Tibial artery (tissue), 4 donors: ENCODE measurements at regions of chr3 and their contacts with region 1.

Region 1: GRCh38 chr3:135149707-135150681 is 354.9 kb downstream of the EPHB1 start:
- DNase-seq: no peak
- H3K4me3 ChIP-seq: no peak overlapping the region
- H3K27ac ChIP-seq: no peak overlapping the region
- H3K4me1 ChIP-seq: no peaks in the 10 kb centered on the region
- H3K27me3 ChIP-seq: no peaks in the 10 kb centered on the region
- CTCF ChIP-seq: no peak

Region 2: DNA sequence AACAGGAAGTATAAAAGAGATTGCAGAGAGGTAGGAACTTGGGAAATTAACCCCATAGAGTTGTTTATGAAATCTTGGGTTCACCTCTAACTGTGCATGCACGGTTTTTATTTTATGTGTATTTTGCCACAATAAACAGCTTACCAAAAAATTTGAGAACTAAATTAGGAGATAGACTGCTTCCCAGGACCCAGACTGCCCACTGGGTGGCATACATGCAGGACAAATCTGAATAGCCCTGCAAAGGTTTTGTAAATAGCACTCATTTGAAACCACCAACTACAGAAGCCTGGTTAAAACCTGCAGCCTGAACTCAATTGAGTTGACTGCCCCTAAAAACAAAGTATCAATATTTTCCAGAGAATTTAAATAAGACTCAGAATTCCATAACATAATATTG is 1023.8 kb before region 1 on chr3:
- intact Hi-C with region 1: loop called (anchors 5 kb)
- DNase-seq: no peak
- H3K4me3 ChIP-seq: no peak overlapping the region
- H3K27ac ChIP-seq: no peak overlapping the region
- H3K4me1 ChIP-seq: no peaks in the 10 kb centered on the region
- H3K27me3 ChIP-seq: no peaks in the 10 kb centered on the region
- CTCF ChIP-seq: no peak

Region 3: GRCh38 chr3:134918441-134918840 is 231.6 kb before region 1 on chr3:
- intact Hi-C with region 1: no loop called
- DNase-seq: no peak
- H3K4me3 ChIP-seq: no peak overlapping the region
- H3K27ac ChIP-seq: no peak overlapping the region
- H3K4me1 ChIP-seq: no peaks in the 10 kb centered on the region
- H3K27me3 ChIP-seq: no peaks in the 10 kb centered on the region
- CTCF ChIP-seq: no peak